ENCODE measurements at regions of chr16 and their contacts with region 1.

Region 1: GRCh38 chr16:57416122-57416509 is 11.5 kb downstream of the CCL17 start:
- DNase-seq: no peak
- ATAC-seq: no peak
- H3K4me3 ChIP-seq: no peak overlapping the region
- H3K4me1 ChIP-seq: peaks cover 10% of the 10 kb centered on the region
- CTCF ChIP-seq: no peak

Region 2: DNA sequence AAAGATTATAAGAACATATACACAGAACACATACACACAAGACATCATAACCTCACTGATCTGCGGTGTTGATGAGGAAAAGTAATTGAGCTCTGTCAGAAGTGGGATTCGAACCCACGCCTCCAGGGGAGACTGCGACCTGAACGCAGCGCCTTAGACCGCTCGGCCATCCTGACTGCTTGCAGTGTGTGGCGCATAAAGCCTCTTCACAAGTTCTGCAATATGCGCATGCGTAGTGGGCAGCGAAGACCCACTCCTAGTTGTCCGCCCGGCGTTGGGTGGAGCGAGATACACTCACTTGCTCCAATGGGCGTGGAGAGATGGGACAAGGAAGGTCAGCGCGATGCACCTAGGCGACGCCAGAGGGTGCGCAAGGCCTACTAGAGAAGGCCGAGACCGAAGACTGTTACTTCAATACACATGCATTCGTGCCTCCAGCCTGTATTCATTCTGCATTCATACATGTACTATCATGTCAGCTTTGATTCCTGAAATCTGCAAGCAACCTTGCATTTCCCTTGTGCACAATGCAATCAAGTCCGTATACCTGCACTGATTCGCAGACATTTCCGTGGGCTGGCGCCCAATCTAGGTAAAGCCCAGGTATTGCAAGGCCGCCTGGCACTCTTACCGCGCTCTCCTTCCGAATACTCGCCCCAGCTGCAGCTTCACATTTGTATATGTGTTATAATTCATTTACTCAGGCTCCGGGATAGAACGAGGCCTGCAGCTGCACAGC is 115.6 kb before region 1 on chr16:
- intact Hi-C with region 1: loop called (anchors 2 to 5 kb)
- DNase-seq: peak; percentile 99 to 100 (median 100)
- ATAC-seq: peak; percentile 96
- H3K4me3 ChIP-seq: peak overlapping the region; percentile 4
- H3K4me1 ChIP-seq: peaks cover 16% of the 10 kb centered on the region
- CTCF ChIP-seq: peak; percentile 89

Measured in mucosa of descending colon (tissue), 3 donors.